Activated naive CD4-positive, alpha-beta T cell treated with anti-CD3 and anti-CD28 coated beads for 36 hours (primary cell): ENCODE measurements at regions of chr9 and their contacts with region 1.

Region 1: DNA sequence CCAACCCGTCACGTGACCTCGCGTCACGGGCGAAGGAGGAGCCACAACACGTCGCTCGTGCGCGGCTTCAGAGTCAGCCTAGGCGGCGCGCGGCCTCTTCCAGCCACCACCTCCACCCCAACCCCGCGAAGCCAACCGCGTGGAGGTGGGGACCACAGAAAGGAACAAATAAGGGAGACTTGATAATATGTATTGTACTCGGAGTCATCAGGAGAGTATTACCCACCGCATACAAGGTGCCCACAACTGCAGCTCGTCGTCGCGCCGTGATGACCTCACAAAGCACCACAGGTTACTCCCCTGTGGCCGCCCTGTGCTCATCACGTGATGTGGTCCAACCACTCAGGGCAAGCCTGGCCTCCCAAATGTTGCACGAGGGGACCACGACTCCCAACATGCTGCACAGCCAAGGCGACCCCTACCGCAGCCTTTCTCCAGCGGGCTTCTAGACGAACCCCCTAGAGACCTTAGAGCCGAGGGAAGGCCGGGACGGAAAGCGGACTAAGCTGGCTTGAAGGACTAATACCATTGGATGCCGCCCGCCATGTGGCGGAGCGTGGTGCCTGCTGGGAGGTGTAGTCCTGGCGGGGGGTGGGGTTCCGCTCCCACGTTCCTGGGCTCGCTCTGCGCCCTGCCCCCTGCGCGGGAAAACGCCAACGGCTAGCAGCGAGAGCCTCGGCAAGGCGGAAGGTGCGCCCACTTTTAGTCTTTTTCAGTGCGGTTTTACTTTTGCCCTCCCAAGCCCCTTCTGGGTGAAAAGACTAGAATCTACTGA is 423 bp upstream of the UBAP2 start:
- DNase-seq: peak; percentile 98
- H3K4me3 Mint-ChIP-seq: peak overlapping the region; percentile 91
- H3K27ac Mint-ChIP-seq: peak overlapping the region; percentile 98
- H3K4me1 Mint-ChIP-seq: peaks cover 33% of the 10 kb centered on the region
- H3K27me3 Mint-ChIP-seq: no peaks in the 10 kb centered on the region

Region 2: DNA sequence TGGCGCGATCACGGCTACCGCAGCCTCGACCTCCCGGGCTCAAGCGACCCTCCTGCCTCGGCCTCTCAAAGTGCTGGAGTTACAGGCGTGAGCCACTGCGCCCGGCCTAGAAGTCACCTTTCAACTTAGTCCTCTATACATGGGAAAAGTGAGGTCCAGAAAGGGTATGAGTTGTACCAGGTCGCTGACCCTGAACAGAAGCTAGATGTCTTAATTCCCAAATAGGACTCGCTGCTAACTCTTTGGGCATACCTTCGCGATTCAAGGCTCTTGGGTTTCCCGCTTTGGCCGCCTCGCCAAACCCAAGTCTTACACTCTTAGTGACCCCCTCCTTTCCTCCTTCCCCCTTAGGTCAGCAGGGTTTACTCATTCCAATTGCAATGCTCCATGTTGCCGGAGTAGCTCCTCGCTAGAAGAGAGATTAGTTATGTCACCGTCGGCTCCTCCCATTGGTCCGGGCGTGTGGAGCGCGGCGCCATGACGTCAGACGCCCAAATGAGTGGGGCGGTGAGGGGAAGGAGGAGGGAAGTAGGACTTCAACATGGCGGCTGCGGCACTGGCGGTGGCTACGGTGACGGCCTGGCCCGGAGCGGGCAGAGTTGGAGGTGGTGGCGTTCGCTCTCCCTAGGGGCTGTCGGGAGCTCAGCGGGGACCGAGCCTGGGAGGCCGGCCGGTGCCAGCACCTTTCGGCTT is 129.6 kb after region 1 on chr9 and contains the start of gene UBAP1:
- CTCF ChIA-PET with region 1: no interaction called
- intact Hi-C with region 1: loop called (anchors 1 kb)
- DNase-seq: peak; percentile 99
- H3K4me3 Mint-ChIP-seq: peak within 1 kb of the TSS; percentile 84
- H3K27ac Mint-ChIP-seq: peak within 1 kb of the TSS; percentile 94
- H3K4me1 Mint-ChIP-seq: peaks cover 16% of the 10 kb centered on the region
- H3K27me3 Mint-ChIP-seq: no peaks in the 10 kb centered on the region
- total RNA-seq, gene UBAP1: 29.9 to 31.7 TPM

Region 3: GRCh38 chr9:34793428-34793827 is 744.3 kb after region 1 on chr9:
- CTCF ChIA-PET with region 1: no interaction called
- intact Hi-C with region 1: no loop called
- DNase-seq: no peak
- H3K4me3 Mint-ChIP-seq: no peak overlapping the region
- H3K27ac Mint-ChIP-seq: no peak overlapping the region
- H3K4me1 Mint-ChIP-seq: no peaks in the 10 kb centered on the region
- H3K27me3 Mint-ChIP-seq: peaks cover 47% of the 10 kb centered on the region